Breast epithelium (tissue), 4 donors: ENCODE measurements at regions of chr4 and their contacts with region 1.

Region 1: DNA sequence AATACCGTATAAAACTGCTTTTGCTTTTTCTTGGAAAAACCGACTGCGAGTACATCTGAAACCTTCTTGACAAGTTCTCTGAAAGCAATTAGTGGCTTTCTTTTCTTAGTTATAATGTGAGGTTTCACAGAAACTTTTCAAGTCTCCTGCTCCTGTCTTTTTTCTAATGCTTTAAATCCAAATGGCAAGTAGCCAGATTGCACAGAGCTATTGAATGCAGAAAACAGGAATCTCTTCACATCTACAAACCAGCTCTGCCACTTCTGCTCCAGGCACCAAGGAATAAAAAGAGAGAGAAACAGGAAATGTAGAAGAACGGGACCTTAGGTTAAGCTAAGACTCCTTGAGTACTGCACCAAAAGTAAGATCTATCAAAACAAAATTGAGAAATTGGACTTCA is 267.3 kb upstream of the TET2 start:
- DNase-seq: no peak
- H3K4me3 ChIP-seq: peak overlapping the region in 1 of 3 donors; percentile 4
- H3K27ac ChIP-seq: no peak overlapping the region
- H3K4me1 ChIP-seq: no peaks in the 10 kb centered on the region
- H3K27me3 ChIP-seq: no peaks in the 10 kb centered on the region
- CTCF ChIP-seq: no peak
- POLR2A ChIP-seq: no peak

Region 2: DNA sequence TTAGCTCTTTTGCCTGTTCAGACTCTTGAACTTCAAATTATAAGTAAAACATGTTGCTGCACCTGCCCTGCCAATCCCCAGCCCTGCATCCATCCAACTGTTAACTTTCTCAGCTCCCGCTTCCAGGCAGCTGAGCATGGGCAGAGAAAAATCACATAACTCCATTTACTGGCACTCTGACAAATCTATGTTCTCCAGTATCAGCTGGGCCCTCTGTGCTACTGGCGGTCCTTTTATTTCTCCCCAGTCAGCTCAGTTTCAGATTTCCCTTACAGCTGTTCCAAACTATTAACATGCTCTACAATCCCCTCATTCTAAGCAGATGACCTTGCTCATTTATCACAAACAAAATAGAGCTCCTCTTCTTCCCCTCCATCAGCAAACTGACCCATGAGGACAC is 26.9 kb after region 1 on chr4:
- intact Hi-C with region 1: loop called (anchors 1 kb)
- DNase-seq: no peak
- H3K4me3 ChIP-seq: no peak overlapping the region
- H3K27ac ChIP-seq: no peak overlapping the region
- H3K4me1 ChIP-seq: no peaks in the 10 kb centered on the region
- H3K27me3 ChIP-seq: no peaks in the 10 kb centered on the region
- CTCF ChIP-seq: no peak
- POLR2A ChIP-seq: no peak

Region 3: GRCh38 chr4:104930298-104930697 is 50.9 kb after region 1 on chr4:
- intact Hi-C with region 1: loop called (anchors 2 kb)
- DNase-seq: no peak
- H3K4me3 ChIP-seq: no peak overlapping the region
- H3K27ac ChIP-seq: no peak overlapping the region
- H3K4me1 ChIP-seq: no peaks in the 10 kb centered on the region
- H3K27me3 ChIP-seq: no peaks in the 10 kb centered on the region
- CTCF ChIP-seq: no peak
- POLR2A ChIP-seq: no peak

Region 4: DNA sequence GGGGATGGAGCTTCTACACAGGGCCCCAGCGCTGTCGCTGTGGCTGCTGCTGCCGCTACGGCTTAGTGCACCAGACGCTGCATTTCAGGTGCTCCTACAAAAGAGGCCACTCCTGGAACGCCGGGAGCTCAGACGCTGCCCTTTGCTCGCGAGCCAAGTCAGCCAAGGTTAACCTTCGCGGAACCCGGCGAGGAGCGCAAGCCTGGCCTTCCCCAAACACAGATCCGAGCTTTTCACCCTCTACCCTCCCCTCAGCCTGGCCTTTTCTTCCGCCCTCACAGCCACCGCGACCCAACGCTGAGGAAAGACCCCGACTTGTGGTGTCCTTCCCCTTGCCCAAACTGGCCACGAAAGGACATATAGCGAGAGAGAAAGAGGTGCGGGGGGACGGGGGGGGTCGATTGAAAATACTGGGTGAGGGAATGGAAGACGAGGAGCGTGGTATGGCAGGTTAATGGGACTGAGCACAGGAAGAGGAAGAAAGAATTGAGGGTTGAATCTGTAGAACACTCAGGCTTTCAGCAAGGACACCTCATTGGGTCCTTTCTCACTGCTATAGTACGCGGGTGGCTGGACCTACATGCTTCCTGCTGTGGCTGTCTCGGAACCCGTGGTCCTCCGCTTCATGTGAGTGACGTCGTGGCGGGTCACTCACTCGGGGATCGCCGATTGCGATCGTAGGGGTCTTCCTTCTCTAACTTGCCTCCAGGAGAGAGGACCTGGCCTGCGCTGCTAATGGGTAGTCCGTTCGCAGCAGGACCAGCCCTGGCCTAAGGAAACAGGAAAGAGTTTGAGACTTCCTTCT is 1436.8 kb after region 1 on chr4 and contains the starts of genes AIMP1 and TBCK:
- intact Hi-C with region 1: no loop called
- DNase-seq: peak; percentile 83 to 88
- H3K4me3 ChIP-seq: peak within 1 kb of the TSS; percentile 72 to 97 (median 96)
- H3K27ac ChIP-seq: peak within 1 kb of the TSS; percentile 95 to 97
- H3K4me1 ChIP-seq: peaks cover 0 to 23% of the 10 kb centered on the region in 2 donors
- H3K27me3 ChIP-seq: no peaks in the 10 kb centered on the region
- CTCF ChIP-seq: no peak
- POLR2A ChIP-seq: peak; percentile 45
- total RNA-seq, gene AIMP1: 25.3 to 34.4 (median 28.2) TPM
- total RNA-seq, gene TBCK: 46.9 to 82.3 (median 57.0) TPM